Activated T-helper 1 cell treated with anti-CD3 and anti-CD28 coated beads, Interleukin-12 subunit alpha, Interleukin-12 subunit beta, Interleukin-2, Interleukin-4 antibody, amounts not matched to agents 30 ng/mL and 10 ng/mL and 1 ng/mL, durations not matched to agents 14 hours and 24 hours and 36 hours (primary cell): ENCODE measurements at regions of chr4 and their contacts with region 1.

Region 1: DNA sequence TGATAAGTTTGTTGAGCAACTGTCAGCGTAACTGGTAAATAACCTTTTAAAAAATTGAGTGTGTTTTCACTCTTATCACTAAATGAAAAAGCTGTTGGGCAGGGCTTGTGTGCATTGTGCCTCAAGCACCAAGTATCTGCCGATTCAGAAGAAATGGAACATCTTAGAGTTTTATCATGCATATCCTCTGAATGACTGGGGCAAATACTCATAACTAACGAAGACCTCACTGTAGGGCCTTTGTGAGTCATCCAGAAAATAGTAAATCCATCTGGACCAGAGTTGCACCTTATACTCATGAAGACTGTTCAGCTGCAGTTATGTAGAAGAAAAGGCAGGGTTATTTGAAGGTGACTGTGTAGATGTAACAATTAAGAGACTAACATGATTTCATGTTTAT is 222.1 kb downstream of the CAMK2D start:
- DNase-seq: no peak
- H3K4me3 Mint-ChIP-seq: peak overlapping the region; percentile 29
- H3K27ac Mint-ChIP-seq: peak overlapping the region; percentile 80
- H3K4me1 Mint-ChIP-seq: peaks cover 39% of the 10 kb centered on the region
- H3K27me3 Mint-ChIP-seq: no peaks in the 10 kb centered on the region

Region 2: GRCh38 chr4:113355550-113356371 is 183.6 kb before region 1 on chr4:
- intact Hi-C with region 1: loop called (anchors 1 kb)
- DNase-seq: peak; percentile 71
- H3K4me3 Mint-ChIP-seq: peak overlapping the region; percentile 30
- H3K27ac Mint-ChIP-seq: peak overlapping the region; percentile 79
- H3K4me1 Mint-ChIP-seq: peaks cover 37% of the 10 kb centered on the region
- H3K27me3 Mint-ChIP-seq: peaks cover 25% of the 10 kb centered on the region

Region 3: DNA sequence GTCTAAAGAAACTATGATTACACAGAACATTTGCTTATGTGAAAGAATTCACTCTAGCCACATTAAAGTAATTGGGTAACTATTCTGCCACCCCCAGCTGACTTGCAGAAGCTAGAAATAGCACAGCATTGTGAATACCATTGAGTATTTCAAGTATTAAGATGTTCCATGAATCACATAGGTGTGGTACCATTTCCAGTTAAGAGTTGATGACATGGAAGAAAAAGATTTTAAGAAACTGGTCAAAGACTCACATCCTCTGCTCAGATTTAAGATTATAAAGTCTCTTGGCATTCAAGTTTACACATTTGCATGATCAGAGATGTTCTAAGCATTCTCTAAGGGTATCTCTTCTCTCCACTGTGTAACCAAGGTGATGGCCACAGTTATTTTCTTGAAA is 65.4 kb before region 1 on chr4:
- intact Hi-C with region 1: loop called (anchors 1 kb)
- DNase-seq: no peak
- H3K4me3 Mint-ChIP-seq: no peak overlapping the region
- H3K27ac Mint-ChIP-seq: peak overlapping the region; percentile 82
- H3K4me1 Mint-ChIP-seq: peaks cover 39% of the 10 kb centered on the region
- H3K27me3 Mint-ChIP-seq: no peaks in the 10 kb centered on the region

Region 4: DNA sequence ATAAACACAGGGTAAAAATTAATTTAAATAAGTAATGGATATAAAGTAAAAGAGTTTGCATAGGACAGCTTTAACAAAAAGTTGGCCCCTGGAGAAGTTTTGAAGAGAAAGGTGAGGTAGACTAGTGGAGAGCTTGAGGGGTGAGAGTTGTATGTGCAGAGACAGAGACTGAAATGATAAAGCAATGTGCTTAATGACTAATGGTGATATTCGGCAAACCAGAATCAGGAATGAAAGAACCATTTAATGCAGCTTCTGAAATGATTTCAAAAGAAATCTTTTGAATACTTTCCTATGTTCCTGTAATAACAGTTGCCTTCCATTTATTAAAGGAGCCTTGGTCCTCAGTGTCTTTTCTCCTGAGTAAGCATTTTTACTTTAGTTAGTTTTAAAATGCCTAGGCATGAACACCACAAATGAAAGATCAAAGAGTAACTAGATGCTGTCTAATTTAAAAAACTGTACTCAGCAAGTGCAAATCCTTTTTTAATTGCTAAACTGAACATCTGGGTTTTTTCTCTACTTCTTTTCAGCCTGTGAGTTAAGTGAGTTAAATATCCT is 193.6 kb after region 1 on chr4:
- intact Hi-C with region 1: loop called (anchors 1 kb)
- DNase-seq: no peak
- H3K4me3 Mint-ChIP-seq: no peak overlapping the region
- H3K27ac Mint-ChIP-seq: peak overlapping the region; percentile 19
- H3K4me1 Mint-ChIP-seq: peaks cover 68% of the 10 kb centered on the region
- H3K27me3 Mint-ChIP-seq: no peaks in the 10 kb centered on the region

Region 5: GRCh38 chr4:113823291-113823659 is 283.9 kb after region 1 on chr4:
- intact Hi-C with region 1: loop called (anchors 1 kb)
- DNase-seq: no peak
- H3K4me3 Mint-ChIP-seq: no peak overlapping the region
- H3K27ac Mint-ChIP-seq: no peak overlapping the region
- H3K4me1 Mint-ChIP-seq: peaks cover 38% of the 10 kb centered on the region
- H3K27me3 Mint-ChIP-seq: no peaks in the 10 kb centered on the region